Gastrocnemius medialis (tissue), 4 donors: ENCODE measurements at regions of chr9 and their contacts with region 1.

Region 1: DNA sequence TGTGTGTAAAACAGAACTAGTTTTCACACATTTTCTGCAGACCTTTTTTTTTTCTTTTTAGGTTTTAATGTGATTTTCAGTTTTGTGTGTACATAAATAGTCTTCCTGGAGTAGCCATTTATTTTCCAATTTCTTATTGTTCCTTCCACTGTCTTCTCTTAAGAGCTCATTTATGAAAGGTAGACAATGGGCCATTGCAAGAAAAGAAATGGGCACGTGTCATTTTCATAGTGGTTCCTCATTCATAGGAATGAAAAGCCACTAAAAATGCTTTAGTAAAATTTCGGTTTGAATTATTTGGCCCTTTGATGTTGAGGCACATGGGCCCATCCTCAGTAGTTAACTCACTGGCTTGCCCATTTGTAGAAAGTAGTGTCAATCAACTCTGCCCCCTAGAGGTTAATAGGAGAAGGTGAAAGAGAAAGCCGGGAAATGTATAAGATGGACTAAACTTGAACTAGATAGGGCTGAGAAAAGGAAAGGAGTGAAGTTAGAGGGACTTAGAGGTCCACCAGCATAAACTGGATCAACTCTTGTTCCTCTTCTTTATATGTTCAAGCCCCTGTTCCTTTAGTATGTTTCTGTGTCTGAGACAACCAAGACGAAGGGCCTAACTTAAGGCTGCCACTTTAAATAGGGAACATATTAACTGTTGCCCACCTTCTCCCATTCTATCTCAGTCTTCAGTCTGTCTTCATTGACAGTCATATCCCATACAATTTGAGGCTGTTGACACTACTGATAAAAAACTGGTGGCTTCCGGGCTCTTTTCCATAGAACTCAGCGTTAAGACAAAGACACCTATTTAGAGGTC is 72.6 kb downstream of the SMARCA2 start:
- DNase-seq: no peak
- ATAC-seq: peak in 1 of 2 donors; percentile 80
- H3K4me3 ChIP-seq: no peak overlapping the region
- H3K27ac ChIP-seq: no peak overlapping the region
- H3K4me1 ChIP-seq: peaks cover 0 to 3% of the 10 kb centered on the region in 2 donors
- H3K27me3 ChIP-seq: no peaks in the 10 kb centered on the region
- CTCF ChIP-seq: peak; percentile 25 to 67 (median 45)
- POLR2A ChIP-seq: no peak

Region 2: GRCh38 chr9:1709345-1709744 is 378.4 kb before region 1 on chr9:
- in situ Hi-C with region 1: loop called in 1 of 4 experiments (anchors 25 kb)
- intact Hi-C with region 1: no loop called
- DNase-seq: no peak
- ATAC-seq: no peak
- H3K4me3 ChIP-seq: no peak overlapping the region
- H3K27ac ChIP-seq: no peak overlapping the region
- H3K4me1 ChIP-seq: no peaks in the 10 kb centered on the region
- H3K27me3 ChIP-seq: no peaks in the 10 kb centered on the region
- CTCF ChIP-seq: peak in 1 of 5 experiments; percentile 24
- POLR2A ChIP-seq: no peak

Region 3: DNA sequence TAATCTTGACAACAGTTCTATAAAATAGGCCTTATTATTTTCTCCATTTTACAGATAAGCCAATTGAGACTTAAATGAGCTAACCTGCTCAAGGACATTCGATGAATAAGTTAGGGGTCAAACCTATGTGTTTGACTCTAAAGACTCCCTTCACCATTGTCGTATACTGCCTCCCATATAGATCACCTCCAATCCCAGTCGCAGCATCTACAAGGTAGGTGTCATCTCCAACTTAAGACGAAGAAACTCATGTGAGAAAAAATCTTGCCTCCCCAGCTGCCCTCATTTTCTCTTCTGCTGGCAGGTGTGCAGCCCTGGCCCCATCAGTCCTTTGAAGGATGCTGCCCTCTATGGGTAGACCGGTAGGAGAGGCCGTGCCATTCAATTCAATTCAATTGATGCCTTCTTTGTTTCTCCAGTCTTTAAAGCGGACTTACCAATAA is 147.8 kb before region 1 on chr9:
- in situ Hi-C with region 1: no loop called
- intact Hi-C with region 1: loop called (anchors 10 kb)
- DNase-seq: no peak
- ATAC-seq: no peak
- H3K4me3 ChIP-seq: no peak overlapping the region
- H3K27ac ChIP-seq: no peak overlapping the region
- H3K4me1 ChIP-seq: no peaks in the 10 kb centered on the region
- H3K27me3 ChIP-seq: no peaks in the 10 kb centered on the region
- CTCF ChIP-seq: peak in 2 of 5 experiments; percentile 30 to 50
- POLR2A ChIP-seq: no peak

Region 4: DNA sequence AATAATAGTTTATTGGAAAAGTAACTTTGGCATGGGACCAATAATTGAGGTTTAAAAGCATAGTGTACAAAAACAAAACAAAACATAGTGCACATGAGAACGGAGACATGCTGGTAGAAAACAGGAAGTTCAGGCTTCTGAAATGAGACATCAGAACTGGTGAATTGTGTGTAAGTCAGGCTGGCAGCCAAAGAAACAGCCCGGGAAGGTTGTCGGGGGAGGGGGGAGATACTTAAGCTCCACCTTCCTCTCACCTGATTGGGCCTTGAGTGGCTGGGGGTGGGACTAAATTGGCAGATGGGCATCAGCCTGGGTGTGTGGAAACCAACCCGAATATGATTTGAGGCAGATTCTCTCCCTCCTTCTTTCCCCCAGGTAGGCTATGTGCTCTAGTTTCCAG is 183.7 kb after region 1 on chr9:
- in situ Hi-C with region 1: no loop called
- intact Hi-C with region 1: no loop called
- DNase-seq: peak in 1 of 2 donors; percentile 31
- ATAC-seq: no peak
- H3K4me3 ChIP-seq: no peak overlapping the region
- H3K27ac ChIP-seq: no peak overlapping the region
- H3K4me1 ChIP-seq: peaks cover 0 to 3% of the 10 kb centered on the region in 2 donors
- H3K27me3 ChIP-seq: no peaks in the 10 kb centered on the region
- CTCF ChIP-seq: no peak
- POLR2A ChIP-seq: no peak